Right cardiac atrium (tissue), 5 donors: ENCODE measurements at regions of chr4 and their contacts with region 1.

Region 1: DNA sequence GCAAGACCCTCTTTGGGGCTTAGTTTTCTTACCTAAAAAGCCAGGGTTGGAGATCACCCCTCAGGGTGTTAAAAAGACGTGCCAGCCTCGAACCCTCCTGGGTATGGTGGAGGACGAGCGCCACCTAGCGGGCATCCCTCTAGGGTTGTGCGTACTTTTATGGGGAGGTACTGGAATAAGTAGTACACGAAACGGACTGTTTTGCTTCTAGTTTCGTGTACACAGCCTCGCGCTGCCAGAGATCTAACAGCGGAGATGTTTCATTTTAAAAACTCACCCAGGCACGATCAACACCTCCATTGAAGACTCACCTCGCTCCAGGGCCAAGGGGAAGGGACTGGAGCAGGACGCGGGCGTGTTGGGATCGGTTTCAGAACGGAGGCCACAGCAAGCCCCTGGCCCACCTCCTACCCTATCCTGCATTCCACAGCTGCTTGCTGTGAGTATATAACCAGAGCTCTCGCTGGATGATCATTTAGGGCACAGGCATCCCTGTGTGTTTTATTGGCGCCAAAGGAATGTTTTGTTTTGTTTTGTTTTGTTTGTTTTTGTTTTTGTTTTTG is 4.8 kb upstream of the NKX3-2 start:
- DNase-seq: peak; percentile 81 to 94 (median 91)
- ATAC-seq: peak; percentile 76 to 77
- H3K4me3 ChIP-seq: no peak overlapping the region
- H3K27ac ChIP-seq: no peak overlapping the region
- H3K4me1 ChIP-seq: peaks cover 7% of the 10 kb centered on the region
- H3K27me3 ChIP-seq: no peaks in the 10 kb centered on the region

Region 2: DNA sequence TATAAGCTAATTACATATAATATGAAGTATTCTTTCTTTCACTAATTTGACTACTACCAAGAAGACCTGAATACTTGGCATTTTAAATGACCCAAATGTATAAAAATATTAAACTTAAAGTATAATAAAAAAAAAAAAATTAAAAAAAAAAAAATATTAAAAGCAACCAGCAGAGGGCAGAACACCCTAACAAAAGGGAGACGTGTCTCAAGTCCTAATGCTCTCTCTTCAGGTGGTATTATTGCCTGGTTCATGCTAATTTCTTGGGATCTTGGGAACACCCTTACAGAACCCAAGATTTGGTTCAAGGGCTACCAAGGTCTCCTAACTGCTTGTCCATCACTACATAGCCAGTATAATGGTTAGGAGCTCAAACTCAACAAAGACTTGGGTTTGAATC is 819.7 kb before region 1 on chr4:
- intact Hi-C with region 1: loop called (anchors 5 kb)
- DNase-seq: no peak
- ATAC-seq: no peak
- H3K4me3 ChIP-seq: no peak overlapping the region
- H3K27ac ChIP-seq: no peak overlapping the region
- H3K4me1 ChIP-seq: no peaks in the 10 kb centered on the region
- H3K27me3 ChIP-seq: peaks cover 2% of the 10 kb centered on the region

Region 3: GRCh38 chr4:12734586-12734985 is 814.5 kb before region 1 on chr4:
- intact Hi-C with region 1: loop called (anchors 5 kb)
- DNase-seq: no peak
- ATAC-seq: no peak
- H3K4me3 ChIP-seq: no peak overlapping the region
- H3K27ac ChIP-seq: no peak overlapping the region
- H3K4me1 ChIP-seq: no peaks in the 10 kb centered on the region
- H3K27me3 ChIP-seq: no peaks in the 10 kb centered on the region

Region 4: GRCh38 chr4:12852338-12853307 is 696.4 kb before region 1 on chr4:
- intact Hi-C with region 1: loop called (anchors 1 to 5 kb)
- DNase-seq: no peak
- ATAC-seq: peak; percentile 81 to 84
- H3K4me3 ChIP-seq: no peak overlapping the region
- H3K27ac ChIP-seq: no peak overlapping the region
- H3K4me1 ChIP-seq: no peaks in the 10 kb centered on the region
- H3K27me3 ChIP-seq: peaks cover 6% of the 10 kb centered on the region

Region 5: GRCh38 chr4:13700196-13701140 is 151.4 kb after region 1 on chr4:
- intact Hi-C with region 1: no loop called
- DNase-seq: no peak
- ATAC-seq: no peak
- H3K4me3 ChIP-seq: no peak overlapping the region
- H3K27ac ChIP-seq: no peak overlapping the region
- H3K4me1 ChIP-seq: peaks cover 4% of the 10 kb centered on the region
- H3K27me3 ChIP-seq: no peaks in the 10 kb centered on the region